ENCODE measurements at regions of chr15 and their contacts with region 1.

Region 1: GRCh38 chr15:80058851-80059785 is at the start of gene ZFAND6:
- DNase-seq: peak; percentile 92 to 96 (median 95)
- H3K4me3 ChIP-seq: peak within 1 kb of the TSS; percentile 81 to 83
- H3K4me3 Mint-ChIP-seq: peak within 1 kb of the TSS; percentile 90 to 97 (median 94)
- H3K27ac ChIP-seq: peak within 1 kb of the TSS; percentile 75
- H3K27ac Mint-ChIP-seq: peak within 1 kb of the TSS; percentile 92 to 98 (median 96)
- H3K4me1 ChIP-seq: peaks cover 35% of the 10 kb centered on the region
- H3K4me1 Mint-ChIP-seq: peaks cover 17 to 43% (median 26%) of the 10 kb centered on the region in 4 donors
- H3K27me3 ChIP-seq: no peaks in the 10 kb centered on the region
- H3K27me3 Mint-ChIP-seq: no peaks in the 10 kb centered on the region
- total RNA-seq, gene ZFAND6: 58.3 to 60.9 TPM

Region 2: DNA sequence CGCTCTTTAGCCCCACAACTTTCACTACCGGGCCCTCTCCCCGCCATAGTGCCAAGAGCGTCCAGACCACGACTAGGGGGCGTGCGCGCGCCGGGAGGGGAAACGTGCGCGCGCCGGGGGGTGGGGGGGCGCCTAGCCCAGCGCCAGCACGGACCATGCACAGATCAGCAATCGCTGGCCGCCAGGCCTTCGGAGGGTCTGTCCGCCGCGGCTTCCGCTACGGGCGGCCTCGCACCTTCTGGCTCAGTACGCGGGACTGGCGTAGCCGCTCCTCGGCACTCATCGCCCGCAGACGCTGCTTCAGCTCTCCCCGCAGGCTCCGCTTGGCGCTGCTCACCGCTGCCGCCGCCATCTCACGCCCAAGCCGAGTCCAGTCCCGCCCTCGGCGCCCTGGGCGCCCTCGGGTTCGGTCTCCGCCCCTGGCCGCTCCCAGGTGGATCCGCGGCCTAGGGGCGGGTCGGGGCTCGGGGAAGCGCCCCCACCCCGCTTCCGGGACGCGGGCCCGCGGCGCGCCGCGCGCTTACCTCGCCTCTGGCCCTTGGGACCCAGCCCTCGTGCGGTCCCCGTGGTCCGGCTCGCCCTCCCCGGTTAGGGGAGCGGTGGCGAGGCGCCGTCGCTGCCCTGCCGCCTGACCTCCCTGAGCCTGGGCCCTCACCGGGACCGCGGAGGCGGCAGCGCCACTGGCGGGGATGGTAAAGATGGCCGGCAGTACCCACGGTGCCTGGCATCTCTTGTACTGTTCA is 162.3 kb before region 1 on chr15 and contains the start of gene MTHFS:
- CTCF ChIA-PET with region 1: interaction called, 3 read pairs
- POLR2A ChIA-PET with region 1: interaction called, 13 read pairs
- intact Hi-C with region 1: no loop called
- DNase-seq: peak; percentile 81 to 87 (median 85)
- H3K4me3 ChIP-seq: peak within 1 kb of the TSS; percentile 74 to 84
- H3K4me3 Mint-ChIP-seq: peak within 1 kb of the TSS; percentile 96 to 100 (median 100)
- H3K27ac ChIP-seq: peak within 1 kb of the TSS; percentile 88
- H3K27ac Mint-ChIP-seq: peak within 1 kb of the TSS; percentile 97 to 100 (median 99)
- H3K4me1 ChIP-seq: peaks cover 32% of the 10 kb centered on the region
- H3K4me1 Mint-ChIP-seq: peaks cover 28 to 45% (median 36%) of the 10 kb centered on the region in 4 donors
- H3K27me3 ChIP-seq: no peaks in the 10 kb centered on the region
- H3K27me3 Mint-ChIP-seq: no peaks in the 10 kb centered on the region
- total RNA-seq, gene MTHFS: 21.3 to 25.6 TPM

Region 3: GRCh38 chr15:79970624-79971434 is 88.3 kb before region 1 on chr15 and contains the start of gene BCL2A1:
- CTCF ChIA-PET with region 1: interaction called, 6 read pairs
- POLR2A ChIA-PET with region 1: interaction called, 8 read pairs
- intact Hi-C with region 1: loop called (anchors 2 kb)
- DNase-seq: peak; percentile 67 to 82 (median 77)
- H3K4me3 ChIP-seq: peak within 1 kb of the TSS; percentile 69 to 92
- H3K4me3 Mint-ChIP-seq: peak within 1 kb of the TSS; percentile 87 to 98 (median 92)
- H3K27ac ChIP-seq: peak within 1 kb of the TSS; percentile 64
- H3K27ac Mint-ChIP-seq: peak within 1 kb of the TSS; percentile 90 to 98 (median 95)
- H3K4me1 ChIP-seq: peaks cover 52% of the 10 kb centered on the region
- H3K4me1 Mint-ChIP-seq: peaks cover 38 to 63% (median 51%) of the 10 kb centered on the region in 4 donors
- H3K27me3 ChIP-seq: no peaks in the 10 kb centered on the region
- H3K27me3 Mint-ChIP-seq: no peaks in the 10 kb centered on the region
- total RNA-seq, gene BCL2A1: 25.4 to 28.5 TPM

Region 4: GRCh38 chr15:80152180-80152845 is 93.2 kb after region 1 on chr15:
- CTCF ChIA-PET with region 1: no interaction called
- POLR2A ChIA-PET with region 1: interaction called, 29 read pairs
- intact Hi-C with region 1: loop called (anchors 1 kb)
- DNase-seq: peak; percentile 76 to 96 (median 80)
- H3K4me3 ChIP-seq: peak overlapping the region in 1 of 2 donors; percentile 33
- H3K4me3 Mint-ChIP-seq: peak overlapping the region; percentile 79 to 94 (median 86)
- H3K27ac ChIP-seq: peak overlapping the region; percentile 56
- H3K27ac Mint-ChIP-seq: peak overlapping the region; percentile 68 to 93 (median 88)
- H3K4me1 ChIP-seq: peaks cover 14% of the 10 kb centered on the region
- H3K4me1 Mint-ChIP-seq: peaks cover 16 to 23% (median 20%) of the 10 kb centered on the region in 4 donors
- H3K27me3 ChIP-seq: no peaks in the 10 kb centered on the region
- H3K27me3 Mint-ChIP-seq: no peaks in the 10 kb centered on the region

Region 5: DNA sequence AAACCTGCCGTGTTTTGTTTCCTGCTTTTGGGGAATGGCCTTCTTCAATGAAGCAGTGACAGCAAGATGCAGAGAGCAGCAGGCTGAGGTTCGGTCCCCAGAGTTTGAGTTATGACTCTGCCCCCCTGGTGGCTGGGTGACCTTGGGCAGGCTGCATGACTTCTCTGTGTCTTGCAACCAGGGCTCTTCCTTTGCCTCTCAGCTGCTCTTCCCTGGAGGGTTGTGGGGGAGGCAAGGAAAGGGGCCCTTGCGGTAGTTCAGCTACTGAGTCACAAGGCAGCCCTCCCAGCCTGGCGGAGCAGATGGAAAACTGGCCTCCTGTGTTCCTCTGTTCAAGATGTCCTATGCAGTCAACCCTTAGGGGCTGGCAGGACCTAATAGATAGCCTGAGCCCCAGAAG is 175.8 kb after region 1 on chr15:
- CTCF ChIA-PET with region 1: no interaction called
- POLR2A ChIA-PET with region 1: interaction called, 3 read pairs
- intact Hi-C with region 1: loop called (anchors 5 kb)
- DNase-seq: peak in 4 of 5 donors; percentile 2 to 18 (median 10)
- H3K4me3 ChIP-seq: no peak overlapping the region
- H3K4me3 Mint-ChIP-seq: no peak overlapping the region
- H3K27ac ChIP-seq: no peak overlapping the region
- H3K27ac Mint-ChIP-seq: no peak overlapping the region
- H3K4me1 ChIP-seq: no peaks in the 10 kb centered on the region
- H3K4me1 Mint-ChIP-seq: no peaks in the 10 kb centered on the region
- H3K27me3 ChIP-seq: no peaks in the 10 kb centered on the region
- H3K27me3 Mint-ChIP-seq: peaks cover 30 to 32% of the 10 kb centered on the region in 2 donors